ENCODE measurements at regions of chr6 and their contacts with region 1.

Region 1: DNA sequence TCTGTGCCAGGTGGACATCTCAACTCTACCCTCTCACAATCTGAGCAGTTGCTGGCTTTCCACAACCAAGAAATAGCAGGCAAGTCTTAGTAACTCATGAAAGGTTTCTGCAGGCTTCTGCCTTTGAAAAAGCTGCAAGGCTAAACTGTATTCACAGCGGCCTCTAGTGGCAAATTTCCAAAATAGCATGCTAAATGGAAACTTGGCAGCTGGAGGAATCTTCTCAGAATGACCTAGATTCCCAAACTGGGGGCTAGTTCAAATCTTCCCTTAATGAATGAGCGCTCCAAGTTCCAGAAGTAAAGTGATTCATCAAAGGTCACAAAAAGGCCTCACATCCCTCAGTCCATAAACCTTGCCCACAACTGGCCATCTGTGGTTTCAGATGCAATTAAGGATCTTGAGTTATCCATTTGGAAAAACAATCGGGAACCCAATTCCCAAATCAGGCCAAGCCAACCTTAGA is 11.9 kb upstream of the CPNE5 start:
- DNase-seq: peak; percentile 64
- H3K4me3 Mint-ChIP-seq: no peak overlapping the region
- H3K27ac Mint-ChIP-seq: no peak overlapping the region
- H3K4me1 Mint-ChIP-seq: no peaks in the 10 kb centered on the region
- H3K27me3 Mint-ChIP-seq: no peaks in the 10 kb centered on the region

Region 2: GRCh38 chr6:36546920-36547645 is 304.1 kb before region 1 on chr6 and contains the start of gene STK38:
- CTCF ChIA-PET with region 1: no interaction called
- intact Hi-C with region 1: no loop called
- DNase-seq: peak; percentile 95
- H3K4me3 Mint-ChIP-seq: peak within 1 kb of the TSS; percentile 97
- H3K27ac Mint-ChIP-seq: peak within 1 kb of the TSS; percentile 97
- H3K4me1 Mint-ChIP-seq: peaks cover 39% of the 10 kb centered on the region
- H3K27me3 Mint-ChIP-seq: no peaks in the 10 kb centered on the region
- total RNA-seq, gene STK38: 23.6 to 24.4 TPM

Region 3: GRCh38 chr6:36780442-36781177 is 70.6 kb before region 1 on chr6:
- CTCF ChIA-PET with region 1: interaction called, 18 read pairs
- intact Hi-C with region 1: loop called (anchors 5 kb)
- DNase-seq: no peak
- H3K4me3 Mint-ChIP-seq: no peak overlapping the region
- H3K27ac Mint-ChIP-seq: no peak overlapping the region
- H3K4me1 Mint-ChIP-seq: no peaks in the 10 kb centered on the region
- H3K27me3 Mint-ChIP-seq: no peaks in the 10 kb centered on the region

Region 4: DNA sequence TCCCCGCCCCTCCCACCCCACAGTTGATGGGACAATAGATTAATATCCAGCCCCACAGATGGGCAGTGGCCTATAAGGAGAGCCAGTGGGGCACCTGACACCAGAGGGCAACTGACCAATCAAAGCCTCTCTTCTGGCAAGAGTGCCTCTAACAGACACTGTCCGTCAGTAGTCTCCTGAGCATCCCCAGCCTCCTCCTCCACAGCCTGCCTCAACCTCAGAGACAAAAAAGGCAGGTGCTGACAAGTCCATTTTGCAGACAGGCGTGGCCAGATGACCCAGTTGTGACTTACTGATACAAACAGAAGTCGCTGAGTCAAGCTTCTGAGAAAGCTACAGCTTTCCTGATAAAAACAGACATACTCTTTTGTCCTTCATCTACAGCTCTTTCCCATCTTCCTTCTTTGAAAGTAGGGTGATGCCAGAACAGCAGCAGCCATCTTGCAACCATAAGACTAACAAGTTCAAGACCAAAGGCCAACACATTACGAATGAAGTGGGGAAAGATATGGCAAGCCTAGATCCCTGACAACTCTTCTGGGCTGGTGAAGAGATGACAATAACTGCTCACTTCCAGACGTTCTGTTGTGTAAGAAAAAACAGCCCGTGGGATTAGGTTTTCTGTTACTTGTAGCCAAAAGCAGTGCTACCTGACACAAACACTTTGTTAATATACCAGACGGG is 11.1 kb after region 1 on chr6:
- CTCF ChIA-PET with region 1: interaction called, 49 read pairs
- intact Hi-C with region 1: no loop called
- DNase-seq: no peak
- H3K4me3 Mint-ChIP-seq: no peak overlapping the region
- H3K27ac Mint-ChIP-seq: no peak overlapping the region
- H3K4me1 Mint-ChIP-seq: peaks cover 24% of the 10 kb centered on the region
- H3K27me3 Mint-ChIP-seq: no peaks in the 10 kb centered on the region

Region 5: GRCh38 chr6:36874443-36875249 is 23.5 kb after region 1 on chr6 and contains the start of gene PPIL1:
- CTCF ChIA-PET with region 1: interaction called, 27 read pairs
- intact Hi-C with region 1: no loop called
- DNase-seq: peak; percentile 88
- H3K4me3 Mint-ChIP-seq: peak within 1 kb of the TSS; percentile 94
- H3K27ac Mint-ChIP-seq: peak within 1 kb of the TSS; percentile 98
- H3K4me1 Mint-ChIP-seq: peaks cover 39% of the 10 kb centered on the region
- H3K27me3 Mint-ChIP-seq: peaks cover 8% of the 10 kb centered on the region
- total RNA-seq, gene PPIL1: 42.8 to 44.0 TPM

Region 6: DNA sequence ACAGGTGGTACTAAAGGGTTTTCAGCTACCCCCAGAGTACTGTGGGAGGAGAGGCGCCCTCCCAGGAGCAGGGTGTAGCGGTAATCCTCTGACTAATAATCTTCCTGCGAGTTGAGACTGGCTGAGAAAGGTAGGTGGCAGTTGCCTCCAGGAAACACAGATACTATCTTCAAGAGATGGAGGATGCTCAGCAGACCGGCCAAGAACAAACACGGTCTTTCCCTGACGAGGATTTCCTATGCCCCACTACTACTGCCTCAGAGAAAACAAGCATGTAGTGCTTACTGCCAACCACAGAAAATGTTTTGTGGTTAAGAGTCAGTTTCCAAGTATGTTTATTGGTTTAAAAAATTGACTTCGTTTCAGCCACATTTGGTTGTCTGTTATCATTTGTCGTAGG is 61.4 kb after region 1 on chr6:
- CTCF ChIA-PET with region 1: no interaction called
- intact Hi-C with region 1: no loop called
- DNase-seq: peak; percentile 72
- H3K4me3 Mint-ChIP-seq: peak overlapping the region; percentile 5
- H3K27ac Mint-ChIP-seq: peak overlapping the region; percentile 71
- H3K4me1 Mint-ChIP-seq: peaks cover 40% of the 10 kb centered on the region
- H3K27me3 Mint-ChIP-seq: no peaks in the 10 kb centered on the region

Measured in activated naive CD4-positive, alpha-beta T cell treated with anti-CD3 and anti-CD28 coated beads for 36 hours (primary cell).